Mammary epithelial cell (primary cell): ENCODE measurements at regions of chr2 and their contacts with region 1.

Region 1: DNA sequence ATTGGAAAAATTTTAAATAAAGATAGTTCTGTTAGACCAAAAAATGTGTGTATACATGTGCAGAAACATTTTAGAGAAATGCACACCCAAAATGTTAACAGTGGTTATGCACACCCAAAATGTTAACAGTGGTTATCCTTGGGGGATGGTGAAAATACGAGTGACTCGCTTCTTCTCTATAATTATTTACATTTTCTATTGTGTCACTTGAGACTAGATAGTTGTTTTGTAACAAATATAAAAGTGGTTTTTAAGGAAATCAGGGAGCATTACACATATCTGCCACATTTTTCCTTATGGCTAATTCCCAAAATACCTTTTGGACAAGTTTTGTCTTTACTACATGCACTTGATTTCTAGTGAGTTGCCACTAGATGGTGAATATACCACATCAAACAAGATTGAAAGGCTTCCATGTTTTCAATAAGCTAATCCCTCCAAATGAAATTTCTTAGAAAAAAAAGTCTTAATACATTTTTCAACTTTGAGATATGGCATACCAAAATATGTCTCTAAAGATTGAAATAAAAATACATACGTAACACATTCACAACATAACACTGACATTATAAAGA is 9.0 kb upstream of the HIBCH start:
- DNase-seq: no peak
- H3K4me3 ChIP-seq: no peak overlapping the region
- H3K27ac ChIP-seq: no peak overlapping the region
- H3K4me1 ChIP-seq: no peaks in the 10 kb centered on the region
- H3K27me3 ChIP-seq: no peaks in the 10 kb centered on the region
- CTCF ChIP-seq: peak; percentile 30 to 37

Region 2: DNA sequence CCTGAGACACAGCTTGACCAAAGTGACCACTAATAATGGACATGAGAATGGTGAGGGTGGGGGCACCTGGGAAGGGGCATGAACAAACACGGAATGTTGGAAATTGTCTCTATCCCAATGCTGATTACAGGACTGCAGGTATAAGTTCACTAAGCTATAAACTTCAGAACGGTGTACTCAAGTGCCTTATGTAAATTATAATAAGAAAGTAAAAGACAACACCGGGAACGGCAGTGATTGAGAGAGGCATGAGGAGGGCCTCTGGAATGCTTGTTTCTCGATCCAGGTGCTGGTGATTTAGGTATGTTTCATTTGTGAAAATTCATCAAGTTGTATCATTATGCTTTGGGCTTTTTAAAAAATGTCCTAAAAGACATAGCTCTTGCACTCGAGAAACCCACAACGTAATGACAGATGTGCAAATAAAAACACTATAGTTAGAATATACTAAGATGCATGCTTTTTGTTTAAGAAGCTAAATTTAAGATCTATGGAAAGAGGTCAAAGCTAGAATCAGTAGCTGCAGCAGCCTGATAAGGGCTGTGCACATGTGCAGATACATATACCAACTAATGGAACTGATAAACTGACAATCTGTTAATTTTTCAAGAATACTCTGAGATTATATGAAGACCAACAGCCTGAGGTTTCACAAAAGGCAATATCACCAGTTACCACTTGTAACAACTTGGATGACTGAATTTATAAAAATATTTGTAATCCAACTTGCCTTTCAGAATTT is 16.6 kb before region 1 on chr2:
- CTCF ChIA-PET with region 1: no interaction called
- dilution Hi-C with region 1: no loop called
- in situ Hi-C with region 1: no loop called
- intact Hi-C with region 1: no loop called
- DNase-seq: no peak
- H3K4me3 ChIP-seq: no peak overlapping the region
- H3K27ac ChIP-seq: no peak overlapping the region
- H3K4me1 ChIP-seq: peaks cover 3% of the 10 kb centered on the region
- H3K27me3 ChIP-seq: no peaks in the 10 kb centered on the region
- CTCF ChIP-seq: no peak

Region 3: DNA sequence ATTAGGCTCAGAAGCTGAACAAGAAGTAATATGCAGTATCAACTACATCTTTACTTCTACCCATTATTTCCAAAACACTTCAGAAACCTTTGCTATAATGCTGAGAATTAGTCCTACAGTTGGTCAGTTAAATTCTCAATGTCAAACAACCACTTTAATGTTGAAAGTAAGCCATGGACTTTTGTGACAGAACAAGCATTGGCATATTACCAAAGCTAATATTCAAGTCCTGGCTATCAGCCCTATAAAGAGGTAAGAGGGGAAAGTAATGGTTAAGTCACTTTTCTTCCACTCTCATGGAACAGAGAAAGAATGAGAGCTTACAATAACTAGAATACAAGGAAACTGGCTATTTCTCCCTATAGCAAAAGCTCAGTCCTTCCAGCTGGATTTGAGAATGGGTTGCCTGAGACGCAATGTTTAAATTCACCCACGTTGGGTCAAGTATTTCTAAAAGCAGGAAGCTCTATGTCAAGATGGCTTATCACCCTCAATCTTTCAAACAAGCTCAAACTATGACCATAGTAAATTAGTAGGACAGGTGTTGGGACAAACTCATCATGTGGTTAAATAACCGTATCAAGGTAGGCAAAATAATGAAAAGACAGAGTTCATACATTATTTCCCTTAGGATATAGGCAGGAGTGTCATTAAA is 48.1 kb after region 1 on chr2:
- CTCF ChIA-PET with region 1: no interaction called
- dilution Hi-C with region 1: no loop called
- in situ Hi-C with region 1: no loop called
- intact Hi-C with region 1: loop called (anchors 1 kb)
- DNase-seq: no peak
- H3K4me3 ChIP-seq: no peak overlapping the region
- H3K27ac ChIP-seq: no peak overlapping the region
- H3K4me1 ChIP-seq: no peaks in the 10 kb centered on the region
- H3K27me3 ChIP-seq: no peaks in the 10 kb centered on the region
- CTCF ChIP-seq: no peak

Region 4: GRCh38 chr2:190511104-190511503 is 182.4 kb after region 1 on chr2:
- CTCF ChIA-PET with region 1: no interaction called
- dilution Hi-C with region 1: no loop called
- in situ Hi-C with region 1: no loop called
- intact Hi-C with region 1: loop called (anchors 1 kb)
- DNase-seq: no peak
- H3K4me3 ChIP-seq: no peak overlapping the region
- H3K27ac ChIP-seq: no peak overlapping the region
- H3K4me1 ChIP-seq: peaks cover 6% of the 10 kb centered on the region
- H3K27me3 ChIP-seq: no peaks in the 10 kb centered on the region
- CTCF ChIP-seq: peak; percentile 30 to 52